ENCODE measurements at regions of chr21 and their contacts with region 1.

Region 1: GRCh38 chr21:42107881-42108553 is 36.9 kb downstream of the UMODL1 start:
- DNase-seq: peak; percentile 69
- H3K4me3 Mint-ChIP-seq: no peak overlapping the region
- H3K27ac Mint-ChIP-seq: no peak overlapping the region
- H3K4me1 Mint-ChIP-seq: no peaks in the 10 kb centered on the region
- H3K27me3 Mint-ChIP-seq: peaks cover 15% of the 10 kb centered on the region
- CTCF ChIP-seq: peak; percentile 81

Region 2: GRCh38 chr21:41993744-41994143 is 114.3 kb before region 1 on chr21:
- CTCF ChIA-PET with region 1: no interaction called
- POLR2A ChIA-PET with region 1: no interaction called
- intact Hi-C with region 1: no loop called
- DNase-seq: no peak
- H3K4me3 Mint-ChIP-seq: no peak overlapping the region
- H3K27ac Mint-ChIP-seq: no peak overlapping the region
- H3K4me1 Mint-ChIP-seq: no peaks in the 10 kb centered on the region
- H3K27me3 Mint-ChIP-seq: no peaks in the 10 kb centered on the region
- CTCF ChIP-seq: no peak

Region 3: GRCh38 chr21:42009831-42010523 is 98.0 kb before region 1 on chr21 and contains the start of gene ZBTB21:
- CTCF ChIA-PET with region 1: interaction called, 24 read pairs
- POLR2A ChIA-PET with region 1: interaction called, 3 read pairs
- intact Hi-C with region 1: no loop called
- DNase-seq: peak; percentile 98
- H3K4me3 Mint-ChIP-seq: peak within 1 kb of the TSS; percentile 78
- H3K27ac Mint-ChIP-seq: peak within 1 kb of the TSS; percentile 95
- H3K4me1 Mint-ChIP-seq: peaks cover 18% of the 10 kb centered on the region
- H3K27me3 Mint-ChIP-seq: no peaks in the 10 kb centered on the region
- CTCF ChIP-seq: no peak
- total RNA-seq, gene ZBTB21: 21.5 and 27.3 TPM in 2 replicates

Region 4: DNA sequence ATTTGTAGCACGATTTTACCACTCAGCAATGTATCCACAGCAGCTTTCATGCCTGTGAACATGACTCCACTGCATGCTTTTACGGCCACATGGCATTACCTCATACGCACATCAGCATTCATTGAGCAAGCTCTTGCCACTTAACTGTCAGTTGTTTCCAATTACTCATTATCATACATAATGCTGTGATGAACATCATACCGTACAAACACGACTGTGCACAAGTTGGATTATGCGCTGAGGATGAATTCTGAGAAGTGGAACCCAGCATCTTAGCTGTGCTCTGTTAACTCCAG is 27.3 kb before region 1 on chr21:
- CTCF ChIA-PET with region 1: interaction called, 11 read pairs
- POLR2A ChIA-PET with region 1: no interaction called
- intact Hi-C with region 1: no loop called
- DNase-seq: peak; percentile 46
- H3K4me3 Mint-ChIP-seq: no peak overlapping the region
- H3K27ac Mint-ChIP-seq: no peak overlapping the region
- H3K4me1 Mint-ChIP-seq: no peaks in the 10 kb centered on the region
- H3K27me3 Mint-ChIP-seq: peaks cover 24% of the 10 kb centered on the region
- CTCF ChIP-seq: no peak

Region 5: GRCh38 chr21:42086969-42087368 is 21.0 kb before region 1 on chr21:
- CTCF ChIA-PET with region 1: interaction called, 11 read pairs
- POLR2A ChIA-PET with region 1: interaction called, 3 read pairs
- intact Hi-C with region 1: no loop called
- DNase-seq: no peak
- H3K4me3 Mint-ChIP-seq: no peak overlapping the region
- H3K27ac Mint-ChIP-seq: no peak overlapping the region
- H3K4me1 Mint-ChIP-seq: no peaks in the 10 kb centered on the region
- H3K27me3 Mint-ChIP-seq: peaks cover 27% of the 10 kb centered on the region
- CTCF ChIP-seq: no peak

Region 6: GRCh38 chr21:42091899-42092508 is 16.0 kb before region 1 on chr21:
- CTCF ChIA-PET with region 1: interaction called, 28 read pairs
- POLR2A ChIA-PET with region 1: interaction called, 4 read pairs
- intact Hi-C with region 1: no loop called
- DNase-seq: no peak
- H3K4me3 Mint-ChIP-seq: no peak overlapping the region
- H3K27ac Mint-ChIP-seq: no peak overlapping the region
- H3K4me1 Mint-ChIP-seq: no peaks in the 10 kb centered on the region
- H3K27me3 Mint-ChIP-seq: peaks cover 18% of the 10 kb centered on the region
- CTCF ChIP-seq: no peak

Region 7: GRCh38 chr21:42097860-42098454 is 10.1 kb before region 1 on chr21:
- CTCF ChIA-PET with region 1: interaction called, 28 read pairs
- POLR2A ChIA-PET with region 1: interaction called, 9 read pairs
- intact Hi-C with region 1: no loop called
- DNase-seq: peak; percentile 93
- H3K4me3 Mint-ChIP-seq: no peak overlapping the region
- H3K27ac Mint-ChIP-seq: peak overlapping the region; percentile 89
- H3K4me1 Mint-ChIP-seq: peaks cover 6% of the 10 kb centered on the region
- H3K27me3 Mint-ChIP-seq: no peaks in the 10 kb centered on the region
- CTCF ChIP-seq: no peak

Region 8: GRCh38 chr21:42161931-42162681 is 54.1 kb after region 1 on chr21:
- CTCF ChIA-PET with region 1: no interaction called
- POLR2A ChIA-PET with region 1: no interaction called
- intact Hi-C with region 1: no loop called
- DNase-seq: no peak
- H3K4me3 Mint-ChIP-seq: no peak overlapping the region
- H3K27ac Mint-ChIP-seq: no peak overlapping the region
- H3K4me1 Mint-ChIP-seq: no peaks in the 10 kb centered on the region
- H3K27me3 Mint-ChIP-seq: no peaks in the 10 kb centered on the region
- CTCF ChIP-seq: no peak